Activated CD8-positive, alpha-beta T cell treated with anti-CD3 and anti-CD28 coated beads for 36 hours (primary cell): ENCODE measurements at regions of chr9 and their contacts with region 1.

Region 1: DNA sequence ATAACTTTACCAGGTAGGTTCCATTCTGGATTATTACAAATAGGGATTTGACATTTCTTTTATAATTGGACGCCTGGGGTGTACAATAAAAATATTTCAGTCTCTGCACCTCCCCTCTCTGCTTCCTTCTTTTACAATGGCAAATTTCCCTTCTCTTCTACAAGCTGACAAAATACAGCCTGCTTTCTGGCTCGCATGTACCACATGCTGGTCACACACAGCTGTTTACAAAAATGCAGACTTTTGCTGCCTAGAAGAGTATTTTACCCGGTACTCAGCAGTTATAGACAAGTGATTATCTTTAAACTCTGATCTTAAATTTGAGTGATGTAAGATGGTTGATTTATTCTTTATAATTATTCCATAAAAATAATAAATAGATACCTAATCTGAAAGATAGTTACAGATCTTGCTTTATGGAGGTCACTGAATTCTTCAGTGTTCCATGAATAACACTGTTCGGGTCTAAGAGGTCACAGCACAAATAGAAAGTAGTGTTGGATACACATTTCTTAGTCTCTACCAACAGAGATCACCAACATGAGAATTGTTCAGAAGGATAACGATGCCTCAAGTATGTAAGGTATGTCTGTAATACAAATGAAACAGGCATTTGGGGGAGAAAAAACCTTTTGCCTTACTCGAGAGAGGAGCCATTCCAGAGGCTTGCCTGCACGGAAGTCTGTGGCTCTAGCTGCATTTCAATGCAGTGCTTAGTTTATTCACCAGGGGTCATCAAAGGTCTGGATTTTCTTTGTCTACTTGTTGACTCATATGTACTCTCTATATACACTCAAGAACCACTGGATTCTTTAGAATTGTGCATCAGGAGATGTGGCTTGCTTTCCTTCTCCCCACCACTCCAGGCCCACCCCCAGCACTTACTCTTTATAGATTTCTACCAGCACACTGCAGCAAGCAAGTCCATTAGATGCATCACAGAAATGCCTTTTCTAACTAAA is 206.6 kb upstream of the RFX3 start:
- DNase-seq: peak; percentile 47
- ATAC-seq: peak; percentile 97
- H3K4me3 Mint-ChIP-seq: peak overlapping the region; percentile 28
- H3K27ac Mint-ChIP-seq: peak overlapping the region; percentile 23
- H3K4me1 Mint-ChIP-seq: peaks cover 22% of the 10 kb centered on the region
- H3K27me3 Mint-ChIP-seq: peaks cover 1% of the 10 kb centered on the region
- CTCF ChIP-seq: peak; percentile 71

Region 2: GRCh38 chr9:3692606-3693005 is 39.8 kb before region 1 on chr9:
- CTCF ChIA-PET with region 1: no interaction called
- POLR2A ChIA-PET with region 1: no interaction called
- intact Hi-C with region 1: no loop called
- DNase-seq: no peak
- ATAC-seq: no peak
- H3K4me3 Mint-ChIP-seq: no peak overlapping the region
- H3K27ac Mint-ChIP-seq: no peak overlapping the region
- H3K4me1 Mint-ChIP-seq: no peaks in the 10 kb centered on the region
- H3K27me3 Mint-ChIP-seq: peaks cover 5% of the 10 kb centered on the region
- CTCF ChIP-seq: no peak

Region 3: DNA sequence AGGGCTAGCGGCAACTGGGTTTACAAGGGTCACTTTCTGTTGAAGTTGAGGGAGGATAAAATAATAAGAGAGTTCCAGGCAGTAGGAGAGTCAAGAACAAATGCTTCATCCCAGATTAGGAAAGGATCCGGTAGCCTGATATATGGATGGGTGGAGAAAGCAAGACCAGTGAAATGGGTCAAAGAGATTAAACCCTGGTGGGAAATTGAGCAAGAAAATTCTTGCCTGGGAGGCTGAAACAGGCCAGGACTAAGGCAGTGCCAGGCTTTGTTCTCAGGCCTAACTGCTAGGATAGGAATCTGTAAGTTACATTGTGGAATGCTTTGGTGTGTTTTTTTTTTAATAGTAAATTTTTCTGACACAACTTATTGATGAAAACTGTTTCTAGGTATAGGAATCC is 50.8 kb after region 1 on chr9:
- CTCF ChIA-PET with region 1: no interaction called
- POLR2A ChIA-PET with region 1: no interaction called
- intact Hi-C with region 1: no loop called
- DNase-seq: no peak
- ATAC-seq: no peak
- H3K4me3 Mint-ChIP-seq: no peak overlapping the region
- H3K27ac Mint-ChIP-seq: no peak overlapping the region
- H3K4me1 Mint-ChIP-seq: no peaks in the 10 kb centered on the region
- H3K27me3 Mint-ChIP-seq: peaks cover 10% of the 10 kb centered on the region
- CTCF ChIP-seq: no peak

Region 4: GRCh38 chr9:3848445-3849114 is 116.2 kb after region 1 on chr9:
- CTCF ChIA-PET with region 1: no interaction called
- POLR2A ChIA-PET with region 1: no interaction called
- intact Hi-C with region 1: loop called (anchors 10 kb)
- DNase-seq: no peak
- ATAC-seq: no peak
- H3K4me3 Mint-ChIP-seq: no peak overlapping the region
- H3K27ac Mint-ChIP-seq: no peak overlapping the region
- H3K4me1 Mint-ChIP-seq: no peaks in the 10 kb centered on the region
- H3K27me3 Mint-ChIP-seq: peaks cover 6% of the 10 kb centered on the region
- CTCF ChIP-seq: no peak

Region 5: GRCh38 chr9:4119778-4120554 is 387.6 kb after region 1 on chr9:
- CTCF ChIA-PET with region 1: interaction called, 5 read pairs
- POLR2A ChIA-PET with region 1: no interaction called
- intact Hi-C with region 1: loop called (anchors 5 kb)
- DNase-seq: no peak
- ATAC-seq: no peak
- H3K4me3 Mint-ChIP-seq: no peak overlapping the region
- H3K27ac Mint-ChIP-seq: no peak overlapping the region
- H3K4me1 Mint-ChIP-seq: no peaks in the 10 kb centered on the region
- H3K27me3 Mint-ChIP-seq: peaks cover 3% of the 10 kb centered on the region
- CTCF ChIP-seq: no peak